ENCODE measurements at regions of chr22 and their contacts with region 1.

Region 1: DNA sequence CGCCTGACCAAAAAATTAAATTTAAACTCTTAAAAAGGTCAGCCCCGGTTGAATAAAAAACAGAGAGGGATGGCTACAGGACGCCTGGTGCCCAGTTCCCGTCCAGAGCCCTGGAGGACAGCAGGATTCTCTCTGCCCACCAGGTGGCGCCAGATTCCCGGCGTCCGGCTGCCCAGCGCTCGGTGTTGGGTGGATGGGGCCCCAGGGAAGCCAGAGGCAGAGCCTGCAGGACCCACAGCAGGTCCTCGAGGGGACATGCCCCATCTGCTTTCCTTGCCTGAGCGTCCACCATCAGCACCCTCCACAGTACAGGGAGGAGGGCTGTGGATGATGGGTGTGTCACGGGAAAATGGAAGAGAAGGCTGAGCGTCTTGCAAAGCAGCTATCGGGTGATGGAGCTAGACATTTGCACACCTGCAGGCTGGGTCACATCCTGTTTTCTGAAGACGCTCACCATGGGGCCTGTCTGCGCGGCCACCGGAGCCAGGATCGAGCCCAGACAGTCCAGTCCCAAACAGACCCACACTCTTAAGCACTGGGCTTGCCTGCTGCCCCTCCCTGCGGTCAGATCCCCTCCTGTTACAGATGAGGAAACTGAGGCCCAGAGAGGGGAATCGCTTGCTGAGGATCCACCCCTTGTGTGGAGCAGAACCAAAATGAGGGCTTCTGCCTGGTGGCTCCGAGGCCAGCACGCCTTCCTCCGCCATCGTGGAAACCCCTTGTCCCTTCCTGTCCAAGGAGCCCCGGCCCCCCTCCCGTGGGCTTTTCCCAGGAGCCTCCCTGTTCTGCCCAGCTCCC is 18.5 kb upstream of the CBX7 start:
- DNase-seq: no peak
- H3K4me3 ChIP-seq: peak overlapping the region; percentile 9 to 19
- H3K27ac ChIP-seq: peak overlapping the region; percentile 30
- H3K4me1 ChIP-seq: peaks cover 51% of the 10 kb centered on the region
- H3K27me3 ChIP-seq: no peaks in the 10 kb centered on the region
- CTCF ChIP-seq: peak; percentile 88 to 99 (median 90)
- POLR2A ChIP-seq: no peak

Region 2: GRCh38 chr22:39309881-39310714 is 139.1 kb after region 1 on chr22:
- intact Hi-C with region 1: loop called (anchors 2 kb)
- DNase-seq: no peak
- H3K4me3 ChIP-seq: no peak overlapping the region
- H3K27ac ChIP-seq: peak overlapping the region; percentile 88
- H3K4me1 ChIP-seq: peaks cover 45% of the 10 kb centered on the region
- H3K27me3 ChIP-seq: no peaks in the 10 kb centered on the region
- CTCF ChIP-seq: no peak
- POLR2A ChIP-seq: no peak

Region 3: GRCh38 chr22:39319270-39320022 is 148.4 kb after region 1 on chr22 and contains the start of gene RPL3:
- intact Hi-C with region 1: loop called (anchors 2 kb)
- DNase-seq: peak in 1 of 2 donors; percentile 98
- H3K4me3 ChIP-seq: peak within 1 kb of the TSS; percentile 82 to 90
- H3K27ac ChIP-seq: peak within 1 kb of the TSS; percentile 98
- H3K4me1 ChIP-seq: peaks cover 48% of the 10 kb centered on the region
- H3K27me3 ChIP-seq: no peaks in the 10 kb centered on the region
- CTCF ChIP-seq: peak in 2 of 3 experiments; percentile 16
- POLR2A ChIP-seq: peak in 1 of 2 donors; percentile 80
- total RNA-seq, gene RPL3: 2,613 TPM

Region 4: GRCh38 chr22:39520054-39520891 is 349.2 kb after region 1 on chr22 and contains the start of gene ATF4:
- intact Hi-C with region 1: loop called (anchors 10 kb)
- DNase-seq: peak in 1 of 2 donors; percentile 97
- H3K4me3 ChIP-seq: peak within 1 kb of the TSS; percentile 87 to 97
- H3K27ac ChIP-seq: peak within 1 kb of the TSS; percentile 99
- H3K4me1 ChIP-seq: peaks cover 52% of the 10 kb centered on the region
- H3K27me3 ChIP-seq: no peaks in the 10 kb centered on the region
- CTCF ChIP-seq: peak in 1 of 3 experiments; percentile 15
- POLR2A ChIP-seq: peak in 1 of 2 donors; percentile 97
- total RNA-seq, gene ATF4: 246 TPM

Measured in vagina (tissue), 2 donors.